ENCODE measurements at regions of chr18 and their contacts with region 1.

Region 1: GRCh38 chr18:74353169-74353775 is 37.6 kb downstream of the C18orf63 start:
- DNase-seq: peak; percentile 50 to 96 (median 76)

Region 2: DNA sequence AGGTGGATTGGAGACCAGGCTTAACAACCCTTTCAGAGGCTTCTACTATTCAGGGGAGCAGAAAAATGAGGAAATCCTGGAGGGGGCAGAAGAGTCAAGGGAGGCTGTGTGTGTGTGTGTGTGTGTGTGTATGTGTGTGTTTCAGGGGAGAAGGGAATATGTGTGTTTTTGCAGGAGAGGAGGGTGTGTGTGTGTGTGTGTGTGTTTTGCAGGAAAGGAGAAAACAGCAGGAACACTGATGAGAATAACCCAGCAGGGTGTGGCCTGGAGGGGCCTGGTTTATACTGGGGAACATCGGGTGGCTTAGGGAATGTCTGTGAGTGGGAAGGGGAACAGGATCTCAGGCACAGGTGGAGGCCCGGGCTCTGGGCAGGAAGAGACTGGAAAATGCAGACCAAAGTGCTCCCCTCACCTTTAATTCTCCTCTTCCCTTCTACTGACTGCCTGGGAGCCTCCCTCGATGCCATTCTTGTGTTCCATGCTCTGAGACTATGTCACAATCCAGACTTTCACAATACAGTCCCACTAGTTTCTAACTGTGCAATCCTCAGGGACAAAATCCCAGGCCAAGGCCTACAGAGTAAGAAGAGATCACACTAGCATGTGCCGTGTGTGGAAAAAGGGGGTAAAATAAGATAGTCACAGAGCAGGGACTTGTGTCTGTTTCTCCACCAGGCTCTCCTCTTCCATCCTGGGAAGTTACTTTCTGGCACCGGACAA is 71.5 kb before region 1 on chr18:
- intact Hi-C with region 1: no loop called
- DNase-seq: no peak

Region 3: GRCh38 chr18:74476140-74476539 is 122.9 kb after region 1 on chr18:
- intact Hi-C with region 1: loop called (anchors 1 kb)
- DNase-seq: peak in 7 of 10 donors; percentile 61 to 94 (median 78)

Region 4: GRCh38 chr18:74495581-74496507 is 142.6 kb after region 1 on chr18 and contains the start of gene CNDP2:
- intact Hi-C with region 1: loop called (anchors 1 kb)
- DNase-seq: peak; percentile 99 to 100 (median 100)

Region 5: GRCh38 chr18:74551936-74552555 is 198.8 kb after region 1 on chr18:
- intact Hi-C with region 1: loop called (anchors 1 kb)
- DNase-seq: peak; percentile 47 to 97 (median 86)

Region 6: DNA sequence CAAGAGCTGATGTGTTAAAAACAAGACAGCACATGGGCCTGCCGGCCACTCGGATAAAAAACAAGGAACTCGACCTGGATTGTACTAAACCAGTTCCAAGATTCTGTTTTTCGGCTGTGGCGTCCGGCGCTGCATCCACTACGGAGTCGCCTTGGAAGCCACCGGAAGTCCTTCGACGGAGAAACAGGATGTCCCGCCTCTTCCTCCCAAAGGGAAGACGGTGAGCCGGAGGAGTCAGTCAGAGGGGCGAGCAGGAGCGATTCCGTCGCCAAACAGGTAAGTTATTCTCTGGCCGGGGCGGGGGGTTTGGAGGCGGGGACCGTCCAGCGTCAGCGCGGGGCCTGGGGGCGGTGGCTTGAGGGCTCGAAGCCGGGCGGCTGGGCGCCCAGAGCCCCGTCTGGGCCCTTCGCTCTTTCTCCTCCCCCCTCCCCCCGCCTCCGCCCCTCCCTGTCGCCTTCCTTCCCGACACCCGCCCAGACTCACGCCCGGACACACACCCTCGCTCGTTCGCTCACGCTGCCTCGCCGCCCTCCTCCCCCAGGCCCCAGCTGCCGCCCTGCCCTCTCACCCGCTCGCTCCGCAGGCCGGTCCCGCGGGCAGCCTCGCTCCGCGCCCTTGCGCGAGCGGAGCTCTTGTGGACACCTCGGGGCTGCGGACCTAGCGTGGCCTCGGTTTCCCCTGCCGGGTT is 244.5 kb after region 1 on chr18 and contains the start of gene ZNF407:
- intact Hi-C with region 1: no loop called
- DNase-seq: peak; percentile 79 to 97 (median 88)

Region 7: DNA sequence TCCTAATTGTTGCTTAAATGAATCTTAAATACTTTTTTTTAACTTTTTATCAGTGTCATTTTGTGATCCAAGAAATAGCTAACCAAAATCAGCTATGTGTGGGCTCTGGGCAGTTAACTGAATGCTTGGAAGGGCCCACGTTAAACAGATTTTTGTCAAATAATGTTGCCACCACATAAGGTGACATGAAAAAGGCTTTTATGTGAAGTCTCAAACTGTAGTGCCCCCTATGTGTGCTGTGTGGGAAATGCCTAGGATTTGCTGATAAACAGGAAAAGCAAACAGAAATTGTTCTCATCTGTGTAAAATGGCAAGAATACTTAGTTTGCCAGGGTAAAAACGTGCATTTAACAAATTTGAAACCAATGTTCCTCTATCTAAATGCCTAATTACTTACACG is 1899.6 kb after region 1 on chr18:
- intact Hi-C with region 1: loop called (anchors 10 kb)
- DNase-seq: no peak

Measured in posterior cingulate gyrus (tissue), 11 donors.